Heart right ventricle (tissue), 16 donors: ENCODE measurements at regions of chrX and their contacts with region 1.

Region 1: DNA sequence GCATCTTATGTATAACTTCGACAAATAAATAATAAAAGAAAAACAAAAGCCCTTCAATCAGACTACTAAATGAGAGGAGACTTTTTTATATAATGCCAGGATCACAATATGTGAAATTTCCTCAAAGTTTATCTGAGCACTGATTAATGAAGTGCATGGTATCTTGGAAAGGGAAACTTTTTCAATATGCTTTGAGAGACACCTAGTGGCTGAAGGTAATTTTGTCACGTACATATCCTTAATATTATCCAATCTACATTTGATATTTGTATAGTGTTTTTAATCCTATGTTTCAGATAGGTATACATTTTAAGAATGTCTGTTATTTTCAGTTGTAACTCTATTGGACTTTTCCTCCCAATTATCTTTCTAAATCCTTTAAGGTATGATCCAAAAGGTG is 146.8 kb downstream of the KLHL4 start:
- DNase-seq: no peak
- ATAC-seq: no peak
- H3K4me3 ChIP-seq: no peak overlapping the region
- H3K27ac ChIP-seq: no peak overlapping the region
- H3K4me1 ChIP-seq: no peaks in the 10 kb centered on the region
- H3K27me3 ChIP-seq: peaks cover 0 to 17% (median 0%) of the 10 kb centered on the region in 7 donors
- CTCF ChIP-seq: peak in 8 of 9 donors; percentile 9 to 62 (median 53)

Region 2: GRCh38 chrX:87338510-87338909 is 325.9 kb before region 1 on chrX:
- intact Hi-C with region 1: loop called (anchors 2 to 10 kb)
- DNase-seq: no peak
- ATAC-seq: no peak
- H3K4me3 ChIP-seq: no peak overlapping the region
- H3K27ac ChIP-seq: no peak overlapping the region
- H3K4me1 ChIP-seq: no peaks in the 10 kb centered on the region
- H3K27me3 ChIP-seq: no peaks in the 10 kb centered on the region
- CTCF ChIP-seq: peak in 8 of 9 donors; percentile 9 to 57 (median 39)

Region 3: DNA sequence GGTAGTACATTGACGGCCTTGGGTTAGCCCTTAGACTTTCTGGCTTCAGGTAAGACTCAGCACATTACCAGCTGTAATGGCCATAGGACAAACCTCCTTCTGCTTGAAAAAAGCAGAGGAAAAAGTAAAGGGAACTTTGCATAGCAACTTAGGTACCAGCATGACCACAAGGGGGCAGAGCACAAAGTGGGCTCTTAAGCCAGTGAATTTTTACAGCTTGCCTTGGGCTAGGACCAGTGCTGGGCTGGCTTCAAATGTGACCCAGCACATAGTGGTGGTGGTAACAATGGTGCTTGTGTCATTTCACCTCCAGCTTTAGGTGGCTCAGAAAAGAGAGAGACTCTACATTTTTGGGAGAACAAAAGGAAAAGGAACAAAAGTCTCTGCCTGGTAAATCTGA is 80.7 kb before region 1 on chrX:
- intact Hi-C with region 1: loop called in 2 of 10 experiments (anchors 5 to 10 kb)
- DNase-seq: no peak
- ATAC-seq: no peak
- H3K4me3 ChIP-seq: no peak overlapping the region
- H3K27ac ChIP-seq: no peak overlapping the region
- H3K4me1 ChIP-seq: no peaks in the 10 kb centered on the region
- H3K27me3 ChIP-seq: peaks cover 0 to 5% (median 0%) of the 10 kb centered on the region in 7 donors
- CTCF ChIP-seq: peak in 7 of 9 donors; percentile 18 to 46 (median 33)